Naive thymus-derived CD4-positive, alpha-beta T cell (primary cell): ENCODE measurements at regions of chr9 and their contacts with region 1.

Region 1: DNA sequence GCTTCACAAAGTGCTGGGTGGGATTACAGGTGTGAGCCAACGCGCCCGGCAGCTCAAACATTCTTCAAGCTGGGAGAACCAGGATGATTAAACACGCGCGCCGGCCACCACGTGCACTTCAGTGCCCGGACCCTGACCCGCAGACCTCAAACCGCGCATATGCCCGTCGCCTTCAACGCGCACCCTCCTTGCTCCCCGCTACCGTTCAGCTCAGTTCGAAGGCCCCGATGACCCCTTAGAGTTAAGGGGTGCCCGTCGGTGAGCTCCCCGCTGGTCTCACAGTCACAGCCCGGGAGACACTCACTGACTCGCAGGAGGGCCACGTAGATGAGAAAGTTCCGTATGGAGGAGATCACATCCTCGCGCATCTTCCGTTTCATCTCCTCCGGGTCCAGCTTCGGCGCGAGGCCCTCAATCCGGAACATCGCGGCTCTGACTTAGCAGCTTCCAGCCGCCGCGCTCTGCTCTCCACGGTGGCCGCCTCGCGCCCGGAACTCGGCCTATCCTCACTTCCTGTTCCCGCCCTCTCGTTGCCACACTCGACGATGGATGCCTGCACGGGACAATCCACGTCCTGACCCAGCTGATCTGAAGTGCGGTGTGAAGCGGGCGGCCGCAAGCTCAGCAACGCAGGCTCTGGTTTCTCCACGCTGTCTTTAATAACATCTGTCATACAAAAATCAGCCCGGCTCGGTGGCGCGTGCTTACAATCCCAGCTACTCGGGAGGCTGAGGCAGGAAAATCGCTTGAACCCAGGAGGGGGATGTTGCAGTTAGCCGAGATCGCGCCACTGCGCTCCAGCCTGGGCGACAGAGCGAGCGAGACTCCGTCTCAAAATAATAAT is at the start of gene TOMM5:
- DNase-seq: peak; percentile 80 to 92 (median 90)
- ATAC-seq: peak; percentile 99
- H3K4me3 ChIP-seq: peak within 1 kb of the TSS; percentile 95
- H3K4me3 Mint-ChIP-seq: peak within 1 kb of the TSS; percentile 93 to 100 (median 98)
- H3K27ac ChIP-seq: peak within 1 kb of the TSS; percentile 88
- H3K27ac Mint-ChIP-seq: peak within 1 kb of the TSS; percentile 93 to 98 (median 96)
- H3K4me1 ChIP-seq: peaks cover 6 to 12% of the 10 kb centered on the region in 2 donors
- H3K4me1 Mint-ChIP-seq: peaks cover 8 to 51% (median 44%) of the 10 kb centered on the region in 7 donors
- H3K27me3 ChIP-seq: no peaks in the 10 kb centered on the region
- H3K27me3 Mint-ChIP-seq: peaks cover 0 to 22% (median 9%) of the 10 kb centered on the region in 5 donors
- total RNA-seq, gene TOMM5: 33.6 to 86.8 (median 44.7) TPM

Region 2: DNA sequence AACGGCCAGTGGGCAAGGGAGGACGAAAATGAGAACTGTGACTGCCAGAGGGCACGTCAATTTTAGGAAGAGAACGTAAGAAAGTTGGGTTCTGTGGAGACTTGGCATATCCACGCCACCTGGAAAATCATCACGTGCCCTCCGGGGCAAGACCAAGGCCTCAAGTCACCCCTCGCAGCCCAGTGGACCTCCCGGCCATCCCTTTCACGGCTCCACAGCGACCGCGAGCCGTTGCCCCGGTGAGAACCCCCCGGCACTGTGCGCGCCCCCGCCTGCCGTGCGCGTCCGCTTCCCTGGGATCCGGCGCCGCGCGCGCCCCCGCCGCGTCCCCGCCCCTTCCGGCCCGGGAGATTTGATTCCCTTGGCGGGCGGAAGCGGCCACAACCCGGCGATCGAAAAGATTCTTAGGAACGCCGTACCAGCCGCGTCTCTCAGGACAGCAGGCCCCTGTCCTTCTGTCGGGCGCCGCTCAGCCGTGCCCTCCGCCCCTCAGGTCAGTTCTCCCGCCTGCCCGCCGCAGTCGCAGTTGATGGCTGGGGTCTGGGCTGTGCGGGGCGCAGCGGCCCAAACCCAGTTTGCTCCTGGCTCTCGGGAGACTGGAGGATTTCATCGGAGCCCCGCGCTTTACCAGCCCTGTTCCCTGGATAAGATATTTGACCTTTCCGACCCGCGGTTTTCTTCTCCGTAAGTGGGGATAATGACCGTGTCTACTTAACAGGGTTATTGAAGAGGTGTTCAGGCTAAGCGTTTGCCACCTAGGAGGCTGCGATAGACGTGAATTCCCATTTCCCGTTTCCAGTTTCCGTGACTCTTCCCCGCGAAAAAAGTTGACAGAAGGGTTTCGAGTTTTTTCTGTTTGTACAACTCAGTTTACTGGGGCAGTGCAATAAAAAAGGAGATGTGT is 1019.6 kb before region 1 on chr9 and contains the start of gene MELK:
- CTCF ChIA-PET with region 1: no interaction called
- POLR2A ChIA-PET with region 1: no interaction called
- intact Hi-C with region 1: loop called in 1 of 2 experiments (anchors 2 kb)
- DNase-seq: peak; percentile 69 to 94 (median 82)
- ATAC-seq: peak; percentile 97
- H3K4me3 ChIP-seq: peak within 1 kb of the TSS; percentile 83
- H3K4me3 Mint-ChIP-seq: peak within 1 kb of the TSS; percentile 88 to 95 (median 90)
- H3K27ac ChIP-seq: peak within 1 kb of the TSS; percentile 76
- H3K27ac Mint-ChIP-seq: peak within 1 kb of the TSS; percentile 62 to 90 (median 83)
- H3K4me1 ChIP-seq: peaks cover 0 to 5% of the 10 kb centered on the region in 2 donors
- H3K4me1 Mint-ChIP-seq: peaks cover 7 to 38% (median 13%) of the 10 kb centered on the region in 7 donors
- H3K27me3 ChIP-seq: no peaks in the 10 kb centered on the region
- H3K27me3 Mint-ChIP-seq: peaks cover 0 to 5% (median 0%) of the 10 kb centered on the region in 5 donors
- total RNA-seq, gene MELK: 0.22 to 40.2 (median 0.88) TPM in 3 of 5 experiments, not detected in the others

Region 3: DNA sequence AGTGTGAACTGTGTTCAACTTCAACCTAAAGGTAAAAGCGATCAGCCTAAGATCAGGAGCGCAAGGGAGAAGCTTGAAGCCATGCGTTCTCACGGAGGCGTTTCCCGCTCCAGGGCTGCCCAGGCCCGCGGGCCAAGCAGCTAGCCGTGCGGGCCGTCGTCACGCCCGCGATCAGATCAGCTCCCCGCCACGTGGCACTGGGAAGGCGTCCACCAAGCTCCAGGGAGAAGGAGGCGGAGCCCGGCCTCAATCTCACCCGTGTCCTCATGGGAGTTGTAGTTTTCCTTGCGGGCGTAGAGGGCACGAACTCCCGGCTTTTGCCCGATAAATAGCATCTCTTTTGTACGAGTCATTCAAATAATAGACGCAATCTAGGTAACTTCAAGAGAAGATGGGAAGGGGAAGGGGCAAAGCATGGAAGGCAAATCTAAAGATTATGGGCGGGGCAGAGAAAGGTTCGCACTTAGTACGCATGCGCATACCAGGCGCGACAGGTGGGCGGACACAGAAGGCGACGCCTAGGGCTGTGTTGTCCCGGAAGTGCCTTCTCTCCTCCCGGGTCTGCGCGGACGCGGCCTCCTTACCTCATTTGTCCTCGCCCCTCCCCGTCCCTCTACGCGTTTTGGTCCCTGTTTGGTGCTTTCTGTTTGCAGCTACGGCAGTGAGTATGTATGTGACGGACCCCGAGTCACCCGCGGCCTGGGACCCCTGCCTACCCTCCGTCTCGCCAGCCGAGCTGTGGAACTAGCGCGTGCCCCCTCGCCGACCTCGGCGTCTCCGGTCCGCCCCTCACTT is 512.8 kb before region 1 on chr9:
- CTCF ChIA-PET with region 1: no interaction called
- POLR2A ChIA-PET with region 1: interaction called, 4 read pairs
- intact Hi-C with region 1: loop called (anchors 1 to 5 kb)
- DNase-seq: peak; percentile 72 to 96 (median 94)
- ATAC-seq: peak; percentile 98
- H3K4me3 ChIP-seq: peak overlapping the region; percentile 67
- H3K4me3 Mint-ChIP-seq: peak overlapping the region; percentile 89 to 98 (median 95)
- H3K27ac ChIP-seq: peak overlapping the region; percentile 99
- H3K27ac Mint-ChIP-seq: peak overlapping the region; percentile 76 to 99 (median 97)
- H3K4me1 ChIP-seq: peaks cover 14 to 15% of the 10 kb centered on the region in 2 donors
- H3K4me1 Mint-ChIP-seq: peaks cover 33 to 56% (median 41%) of the 10 kb centered on the region in 7 donors
- H3K27me3 ChIP-seq: no peaks in the 10 kb centered on the region
- H3K27me3 Mint-ChIP-seq: peaks cover 0 to 10% (median 3%) of the 10 kb centered on the region in 5 donors

Region 4: GRCh38 chr9:37422289-37423104 is 169.8 kb before region 1 on chr9 and contains the start of gene GRHPR:
- CTCF ChIA-PET with region 1: no interaction called
- POLR2A ChIA-PET with region 1: interaction called, 6 read pairs
- intact Hi-C with region 1: loop called (anchors 1 to 5 kb)
- DNase-seq: peak; percentile 76 to 93 (median 84)
- ATAC-seq: peak; percentile 99
- H3K4me3 ChIP-seq: peak within 1 kb of the TSS; percentile 86
- H3K4me3 Mint-ChIP-seq: peak within 1 kb of the TSS; percentile 84 to 98 (median 96)
- H3K27ac ChIP-seq: peak within 1 kb of the TSS; percentile 89
- H3K27ac Mint-ChIP-seq: peak within 1 kb of the TSS; percentile 87 to 98 (median 95)
- H3K4me1 ChIP-seq: peaks cover 5 to 12% of the 10 kb centered on the region in 2 donors
- H3K4me1 Mint-ChIP-seq: peaks cover 19 to 31% (median 23%) of the 10 kb centered on the region in 7 donors
- H3K27me3 ChIP-seq: no peaks in the 10 kb centered on the region
- H3K27me3 Mint-ChIP-seq: no peaks in the 10 kb centered on the region
- total RNA-seq, gene GRHPR: 33.2 to 58.6 (median 53.1) TPM

Region 5: DNA sequence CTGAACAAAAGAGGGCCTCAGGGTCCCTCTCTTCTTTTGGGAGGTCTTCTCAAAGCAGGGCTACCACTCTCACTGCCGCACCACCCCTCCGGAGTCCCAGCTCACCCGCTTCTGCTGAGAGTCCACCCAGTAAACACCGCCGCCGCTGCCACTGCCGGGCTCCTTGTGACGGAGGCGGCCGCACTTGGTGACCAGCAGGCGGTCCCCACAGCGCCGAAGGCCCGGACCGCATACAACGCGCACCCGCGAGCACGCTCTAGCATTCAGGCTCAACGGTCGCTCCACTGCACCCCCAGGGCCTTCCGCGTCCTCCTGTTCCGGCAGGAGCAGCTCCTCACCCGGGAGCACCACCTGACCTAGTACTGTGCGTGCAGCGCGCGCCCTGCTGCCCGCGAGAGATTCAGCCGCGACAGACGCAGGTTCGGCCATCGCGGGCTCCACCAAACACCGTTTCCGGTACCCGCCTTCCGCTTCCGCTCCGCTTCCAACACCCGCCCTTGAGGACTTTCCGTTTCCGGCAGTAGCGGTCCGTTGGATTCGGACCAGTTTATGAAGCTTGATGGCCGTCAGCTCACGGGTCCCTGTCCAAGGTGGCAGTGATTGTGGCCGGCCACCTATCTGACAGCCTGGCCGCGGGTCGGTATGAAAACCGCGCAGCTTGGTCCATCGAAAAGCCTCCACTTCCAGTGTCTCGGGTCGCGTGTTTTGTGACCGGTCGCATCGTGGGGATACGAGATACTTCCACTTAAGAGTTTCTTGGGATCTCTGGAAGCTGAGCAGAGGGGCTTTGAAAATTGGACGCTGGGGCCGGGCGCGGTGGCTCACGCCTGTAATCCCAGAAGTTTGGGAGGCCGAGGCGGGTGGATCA is 192.5 kb after region 1 on chr9 and contains the start of gene EXOSC3:
- CTCF ChIA-PET with region 1: no interaction called
- POLR2A ChIA-PET with region 1: interaction called, 3 read pairs
- intact Hi-C with region 1: loop called (anchors 1 kb)
- DNase-seq: peak; percentile 66 to 85 (median 81)
- ATAC-seq: peak; percentile 92
- H3K4me3 ChIP-seq: peak within 1 kb of the TSS; percentile 92
- H3K4me3 Mint-ChIP-seq: peak within 1 kb of the TSS; percentile 96 to 98 (median 97)
- H3K27ac ChIP-seq: peak within 1 kb of the TSS; percentile 85
- H3K27ac Mint-ChIP-seq: peak within 1 kb of the TSS; percentile 95 to 98 (median 96)
- H3K4me1 ChIP-seq: peaks cover 18 to 21% of the 10 kb centered on the region in 2 donors
- H3K4me1 Mint-ChIP-seq: peaks cover 18 to 50% (median 40%) of the 10 kb centered on the region in 7 donors
- H3K27me3 ChIP-seq: no peaks in the 10 kb centered on the region
- H3K27me3 Mint-ChIP-seq: peaks cover 0 to 4% (median 0%) of the 10 kb centered on the region in 5 donors
- total RNA-seq, gene EXOSC3: 27.8 to 66.1 (median 60.7) TPM

Region 6: GRCh38 chr9:38068866-38069629 is 476.7 kb after region 1 on chr9 and contains the start of gene SHB:
- CTCF ChIA-PET with region 1: no interaction called
- POLR2A ChIA-PET with region 1: no interaction called
- intact Hi-C with region 1: loop called (anchors 2 to 5 kb)
- DNase-seq: peak; percentile 54 to 80 (median 75)
- ATAC-seq: peak; percentile 89
- H3K4me3 ChIP-seq: peak within 1 kb of the TSS; percentile 83
- H3K4me3 Mint-ChIP-seq: peak within 1 kb of the TSS; percentile 76 to 96 (median 88)
- H3K27ac ChIP-seq: peak within 1 kb of the TSS; percentile 76
- H3K27ac Mint-ChIP-seq: peak within 1 kb of the TSS in 8 of 9 donors; percentile 44 to 81 (median 73)
- H3K4me1 ChIP-seq: peaks cover 6 to 18% of the 10 kb centered on the region in 2 donors
- H3K4me1 Mint-ChIP-seq: peaks cover 5 to 39% (median 33%) of the 10 kb centered on the region in 7 donors
- H3K27me3 ChIP-seq: no peaks in the 10 kb centered on the region
- H3K27me3 Mint-ChIP-seq: peaks cover 0 to 58% (median 0%) of the 10 kb centered on the region in 5 donors
- total RNA-seq, gene SHB: 0.29 to 2.0 (median 0.81) TPM